MCF 10A (cell line): ENCODE measurements at regions of chr2 and their contacts with region 1.

Region 1: DNA sequence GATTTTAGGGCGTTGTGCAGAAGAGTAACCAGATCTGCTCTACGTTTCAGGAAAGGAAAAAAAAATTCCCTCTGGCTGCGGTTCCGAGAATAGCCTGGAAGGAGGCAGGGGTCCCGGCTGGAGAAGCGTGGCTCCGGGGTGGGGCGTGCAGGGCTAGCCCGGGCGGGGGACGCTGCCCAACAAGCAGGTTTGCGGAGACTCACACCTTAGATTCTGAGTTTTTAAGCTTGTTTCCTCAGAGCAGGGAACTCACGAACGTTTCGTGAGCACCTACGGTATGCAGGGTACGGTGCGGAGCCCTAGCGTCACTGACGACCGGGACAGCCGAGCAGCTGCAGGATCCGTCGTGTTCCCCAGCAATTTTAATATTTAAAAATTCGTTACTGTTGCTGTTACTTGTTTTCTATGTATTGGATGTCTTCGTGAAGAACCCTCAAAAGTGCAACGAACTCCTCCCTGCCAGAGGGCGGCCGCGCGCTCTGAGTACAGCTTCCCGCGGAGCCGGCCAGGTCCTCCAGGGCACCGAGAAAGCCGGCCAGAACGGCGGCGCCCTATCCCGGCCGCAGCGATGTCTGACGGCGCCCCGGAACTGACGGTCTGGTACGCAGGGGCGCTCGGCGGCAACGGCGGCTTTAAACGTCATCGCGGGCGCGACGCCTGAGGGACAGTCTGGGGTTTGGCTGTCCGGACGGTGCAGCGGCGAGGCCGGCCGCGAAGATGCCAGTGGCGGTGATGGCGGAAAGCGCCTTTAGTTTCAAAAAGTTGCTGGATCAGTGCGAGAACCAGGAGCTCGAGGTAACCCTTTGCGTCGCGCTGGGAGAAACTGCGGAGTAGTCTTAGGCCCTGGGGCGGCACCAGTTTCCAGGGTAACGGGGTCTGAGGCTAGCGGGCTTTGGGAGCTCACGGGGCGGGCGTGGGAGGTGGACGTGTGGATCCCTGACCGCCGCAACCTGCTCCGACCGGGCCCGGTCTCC is at the start of gene COPS8:
- DNase-seq: peak; percentile 93
- H3K4me3 Mint-ChIP-seq: peak within 1 kb of the TSS; percentile 99
- H3K27ac Mint-ChIP-seq: peak within 1 kb of the TSS; percentile 94
- H3K4me1 Mint-ChIP-seq: peaks cover 8% of the 10 kb centered on the region
- H3K27me3 Mint-ChIP-seq: no peaks in the 10 kb centered on the region
- CTCF ChIP-seq: peak; percentile 21
- total RNA-seq, gene COPS8: 249 and 274 TPM in 2 replicates

Region 2: GRCh38 chr2:237072067-237072931 is 13.2 kb before region 1 on chr2:
- CTCF ChIA-PET with region 1: interaction called, 6 read pairs
- POLR2A ChIA-PET with region 1: interaction called, 29 read pairs
- intact Hi-C with region 1: no loop called
- DNase-seq: peak; percentile 59
- H3K4me3 Mint-ChIP-seq: no peak overlapping the region
- H3K27ac Mint-ChIP-seq: no peak overlapping the region
- H3K4me1 Mint-ChIP-seq: peaks cover 8% of the 10 kb centered on the region
- H3K27me3 Mint-ChIP-seq: no peaks in the 10 kb centered on the region
- CTCF ChIP-seq: peak; percentile 91

Region 3: GRCh38 chr2:237101118-237101979 is 15.8 kb after region 1 on chr2:
- CTCF ChIA-PET with region 1: interaction called, 5 read pairs
- POLR2A ChIA-PET with region 1: interaction called, 226 read pairs
- intact Hi-C with region 1: no loop called
- DNase-seq: no peak
- H3K4me3 Mint-ChIP-seq: no peak overlapping the region
- H3K27ac Mint-ChIP-seq: peak overlapping the region; percentile 51
- H3K4me1 Mint-ChIP-seq: peaks cover 16% of the 10 kb centered on the region
- H3K27me3 Mint-ChIP-seq: no peaks in the 10 kb centered on the region
- CTCF ChIP-seq: no peak

Region 4: DNA sequence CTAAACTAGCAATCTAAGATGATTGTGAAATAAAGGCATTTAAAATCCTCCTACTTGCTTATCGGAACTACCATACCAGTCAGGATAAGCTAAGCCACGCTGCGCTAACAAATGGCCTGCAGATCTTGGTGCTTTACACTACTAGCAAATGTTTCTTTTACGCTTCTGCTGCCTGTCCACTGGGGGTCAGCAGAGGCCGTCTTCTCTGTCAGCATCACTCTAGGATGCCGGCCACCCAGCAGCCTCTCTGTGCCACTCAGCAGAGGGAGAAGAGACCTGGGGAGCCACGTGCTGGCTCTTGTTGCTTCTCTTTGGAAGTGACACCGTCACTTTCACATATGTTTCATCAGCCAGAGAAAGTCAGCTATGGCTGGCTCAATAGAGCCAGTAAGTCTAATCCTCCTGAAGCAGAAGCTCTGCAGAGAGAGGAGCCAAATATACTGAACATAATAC is 36.7 kb after region 1 on chr2:
- CTCF ChIA-PET with region 1: interaction called, 5 read pairs
- POLR2A ChIA-PET with region 1: interaction called, 25 read pairs
- intact Hi-C with region 1: no loop called
- DNase-seq: peak; percentile 82
- H3K4me3 Mint-ChIP-seq: no peak overlapping the region
- H3K27ac Mint-ChIP-seq: peak overlapping the region; percentile 82
- H3K4me1 Mint-ChIP-seq: peaks cover 25% of the 10 kb centered on the region
- H3K27me3 Mint-ChIP-seq: no peaks in the 10 kb centered on the region
- CTCF ChIP-seq: peak; percentile 80

Region 5: GRCh38 chr2:237128026-237128703 is 42.6 kb after region 1 on chr2:
- CTCF ChIA-PET with region 1: no interaction called
- POLR2A ChIA-PET with region 1: interaction called, 14 read pairs
- intact Hi-C with region 1: no loop called
- DNase-seq: peak; percentile 98
- H3K4me3 Mint-ChIP-seq: no peak overlapping the region
- H3K27ac Mint-ChIP-seq: no peak overlapping the region
- H3K4me1 Mint-ChIP-seq: no peaks in the 10 kb centered on the region
- H3K27me3 Mint-ChIP-seq: no peaks in the 10 kb centered on the region
- CTCF ChIP-seq: no peak

Region 6: DNA sequence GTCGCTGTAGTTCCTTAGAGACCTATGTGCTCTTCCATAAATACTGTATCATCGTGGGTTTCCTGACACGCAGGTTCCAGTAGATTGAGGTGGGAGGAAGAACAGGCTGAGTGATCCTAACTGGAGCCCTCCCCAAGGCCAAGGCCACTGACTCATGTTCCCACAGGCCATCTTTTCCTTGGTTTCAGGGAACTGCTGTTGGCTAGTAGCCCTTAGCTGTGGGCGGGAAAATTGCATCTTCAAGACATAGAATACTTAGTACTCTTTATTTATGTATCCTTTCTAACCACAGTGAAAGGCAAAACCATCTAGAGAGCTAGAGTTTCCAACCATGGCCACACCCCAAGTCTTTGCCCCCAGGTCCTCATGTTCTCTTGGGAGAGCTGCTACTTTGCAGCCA is 56.0 kb after region 1 on chr2:
- CTCF ChIA-PET with region 1: no interaction called
- POLR2A ChIA-PET with region 1: interaction called, 18 read pairs
- intact Hi-C with region 1: no loop called
- DNase-seq: peak; percentile 94
- H3K4me3 Mint-ChIP-seq: peak overlapping the region; percentile 3
- H3K27ac Mint-ChIP-seq: peak overlapping the region; percentile 85
- H3K4me1 Mint-ChIP-seq: peaks cover 28% of the 10 kb centered on the region
- H3K27me3 Mint-ChIP-seq: no peaks in the 10 kb centered on the region
- CTCF ChIP-seq: no peak

Region 7: DNA sequence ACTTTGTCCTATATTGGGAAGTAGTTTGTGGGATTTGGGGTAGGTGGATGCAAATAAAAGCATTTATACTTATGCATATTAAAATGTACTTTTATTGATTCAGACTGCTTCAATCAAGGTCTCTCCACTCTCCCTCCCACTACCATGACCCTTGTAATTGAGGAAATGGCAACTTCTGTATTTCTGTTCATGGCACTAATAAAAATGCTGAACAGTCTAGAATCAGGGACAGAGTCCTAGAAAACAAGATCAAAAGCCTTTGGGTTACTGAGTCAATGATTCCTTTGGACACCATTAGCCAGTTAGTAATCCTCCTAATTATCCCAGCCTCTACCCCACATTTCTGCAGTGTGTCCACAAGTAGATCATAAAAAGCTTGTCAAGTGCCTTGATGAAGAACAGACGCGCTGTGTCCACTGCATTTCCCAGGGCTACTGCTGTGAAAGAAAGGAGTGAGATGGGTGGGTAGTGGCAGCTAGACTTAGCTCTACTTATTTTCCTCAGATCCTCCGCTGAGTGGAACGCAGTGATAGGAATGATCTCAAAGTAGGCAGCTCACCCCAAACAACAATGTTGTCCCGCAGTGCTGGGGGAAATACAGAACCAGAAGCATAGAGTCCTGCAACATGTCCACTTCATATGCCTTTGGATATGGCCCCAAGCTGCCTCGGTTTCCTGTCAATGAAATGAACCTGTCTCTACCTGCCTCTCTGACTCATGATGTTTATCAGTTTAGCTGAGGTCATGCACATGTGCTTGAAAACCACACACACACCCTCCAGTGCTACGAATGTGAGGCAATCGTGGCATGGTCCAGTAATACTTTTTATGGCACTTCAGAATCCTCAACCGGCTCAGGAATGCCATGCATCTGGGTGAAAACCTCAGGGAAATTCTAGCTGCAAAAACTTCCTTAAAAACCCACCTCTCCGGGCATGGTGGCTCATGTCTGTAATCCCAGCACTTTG is 212.9 kb after region 1 on chr2:
- CTCF ChIA-PET with region 1: interaction called, 4 read pairs
- POLR2A ChIA-PET with region 1: interaction called, 20 read pairs
- intact Hi-C with region 1: loop called (anchors 10 kb)
- DNase-seq: peak; percentile 96
- H3K4me3 Mint-ChIP-seq: no peak overlapping the region
- H3K27ac Mint-ChIP-seq: peak overlapping the region; percentile 86
- H3K4me1 Mint-ChIP-seq: peaks cover 50% of the 10 kb centered on the region
- H3K27me3 Mint-ChIP-seq: no peaks in the 10 kb centered on the region
- CTCF ChIP-seq: no peak